ENCODE measurements at regions of chr9 and their contacts with region 1.

Region 1: DNA sequence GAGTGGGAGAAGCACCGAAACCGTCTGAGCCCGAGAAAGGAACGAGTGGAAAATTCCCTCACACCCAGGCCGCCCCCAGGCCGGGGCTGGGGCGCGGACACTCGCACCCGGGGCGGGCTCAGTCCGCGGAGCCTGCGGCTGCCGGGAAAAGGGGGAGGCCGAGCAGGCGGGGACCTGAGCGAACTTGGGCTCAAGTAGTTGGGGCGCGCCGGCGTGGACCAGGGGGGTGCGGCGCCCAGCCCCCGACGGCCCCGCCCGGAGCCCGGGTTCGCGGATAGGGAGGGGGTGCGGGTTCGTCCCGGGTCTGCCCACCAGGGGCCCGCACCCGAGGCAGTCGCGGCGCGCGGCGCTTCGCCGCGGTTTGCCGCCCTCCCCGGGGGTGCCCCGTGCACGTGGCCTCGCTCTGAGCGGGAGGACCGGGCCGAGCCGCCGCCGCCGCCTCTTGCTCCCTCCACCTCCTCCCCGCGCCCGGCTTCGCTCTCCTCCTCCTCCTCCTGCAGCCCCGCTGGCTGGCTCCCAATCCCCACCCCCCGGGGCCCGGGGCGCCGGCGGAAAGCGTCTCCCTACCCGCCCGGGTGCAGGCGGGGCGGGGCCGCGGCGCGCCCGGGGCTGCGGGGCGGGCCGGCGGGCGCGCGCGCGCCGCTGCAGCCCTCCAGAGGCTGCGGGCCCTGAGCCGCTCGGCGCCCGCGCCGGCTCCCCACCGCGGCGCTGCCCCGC is 1.1 kb upstream of the NFIB start:
- DNase-seq: peak; percentile 98
- ATAC-seq: peak; percentile 82

Region 2: DNA sequence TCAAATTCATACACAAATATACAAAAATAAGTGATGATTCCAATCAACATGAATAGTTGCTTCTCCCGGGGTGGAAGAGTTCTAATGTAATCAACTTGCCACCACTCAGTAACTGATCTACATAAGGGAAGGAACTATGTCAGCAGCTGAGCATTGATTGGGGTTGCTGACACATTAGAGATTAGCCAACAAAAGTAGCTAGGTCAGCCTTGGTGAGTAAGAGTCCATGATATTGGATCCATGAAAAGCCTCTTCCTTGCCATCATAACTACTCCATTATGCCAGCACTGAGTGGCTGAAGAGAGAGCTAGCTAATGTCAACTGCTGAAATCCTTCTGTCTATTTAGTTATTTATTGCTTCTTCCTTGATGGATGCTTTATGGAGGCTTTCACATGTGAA is 311.0 kb before region 1 on chr9:
- intact Hi-C with region 1: no loop called
- DNase-seq: no peak
- ATAC-seq: no peak

Region 3: GRCh38 chr9:14251154-14252071 is 63.7 kb before region 1 on chr9:
- intact Hi-C with region 1: loop called (anchors 10 kb)
- DNase-seq: peak; percentile 89
- ATAC-seq: peak; percentile 94